Lower leg skin (tissue), 4 donors: ENCODE measurements at regions of chr4 and their contacts with region 1.

Region 1: GRCh38 chr4:22167201-22167600 is 218.6 kb upstream of the KCNIP4 start:
- DNase-seq: no peak
- H3K4me3 ChIP-seq: no peak overlapping the region
- CTCF ChIP-seq: no peak
- POLR2A ChIP-seq: no peak

Region 2: GRCh38 chr4:21226637-21227538 is 940.3 kb before region 1 on chr4:
- intact Hi-C with region 1: no loop called
- DNase-seq: no peak
- H3K4me3 ChIP-seq: no peak overlapping the region
- CTCF ChIP-seq: no peak
- POLR2A ChIP-seq: no peak

Region 3: GRCh38 chr4:22179124-22179874 is 12.1 kb after region 1 on chr4:
- intact Hi-C with region 1: loop called (anchors 1 kb)
- DNase-seq: no peak
- H3K4me3 ChIP-seq: no peak overlapping the region
- CTCF ChIP-seq: no peak
- POLR2A ChIP-seq: no peak